ENCODE measurements at regions of chr2 and their contacts with region 1.

Region 1: DNA sequence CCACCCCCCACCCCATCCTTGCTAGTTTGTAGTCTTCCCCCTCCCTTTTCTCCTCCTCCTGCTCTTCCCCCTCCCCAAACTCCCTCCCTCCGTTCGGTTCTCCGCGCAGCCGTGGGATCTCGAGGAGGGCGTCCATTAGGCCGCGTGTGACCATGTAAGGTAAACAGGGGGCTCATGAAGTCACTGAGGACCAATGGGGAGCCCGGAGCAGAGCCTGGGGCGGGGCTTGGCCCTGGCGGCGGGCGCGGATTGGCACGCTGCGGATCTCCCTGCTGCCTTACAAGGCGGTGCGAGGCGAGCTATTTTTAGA is 246 bp upstream of the KLF7 start:
- DNase-seq: peak; percentile 99 to 100 (median 99)
- ATAC-seq: peak; percentile 93 to 95 (median 94)
- H3K4me3 ChIP-seq: peak overlapping the region; percentile 62 to 96 (median 80)
- H3K27ac ChIP-seq: peak overlapping the region; percentile 94 to 100 (median 100)
- H3K4me1 ChIP-seq: peaks cover 11 to 49% (median 31%) of the 10 kb centered on the region in 12 donors
- H3K27me3 ChIP-seq: no peaks in the 10 kb centered on the region
- CTCF ChIP-seq: no peak
- POLR2A ChIP-seq: no peak

Region 2: GRCh38 chr2:207046724-207047123 is 119.3 kb before region 1 on chr2:
- intact Hi-C with region 1: loop called in 1 of 10 experiments (anchors 10 kb)
- DNase-seq: no peak
- ATAC-seq: peak in 3 of 4 donors; percentile 65 to 77 (median 73)
- H3K4me3 ChIP-seq: no peak overlapping the region
- H3K27ac ChIP-seq: peak overlapping the region in 1 of 12 donors; percentile 0
- H3K4me1 ChIP-seq: peaks cover 0 to 22% (median 6%) of the 10 kb centered on the region in 12 donors
- H3K27me3 ChIP-seq: no peaks in the 10 kb centered on the region
- CTCF ChIP-seq: peak in 7 of 12 donors; percentile 29 to 50 (median 37)
- POLR2A ChIP-seq: no peak

Region 3: DNA sequence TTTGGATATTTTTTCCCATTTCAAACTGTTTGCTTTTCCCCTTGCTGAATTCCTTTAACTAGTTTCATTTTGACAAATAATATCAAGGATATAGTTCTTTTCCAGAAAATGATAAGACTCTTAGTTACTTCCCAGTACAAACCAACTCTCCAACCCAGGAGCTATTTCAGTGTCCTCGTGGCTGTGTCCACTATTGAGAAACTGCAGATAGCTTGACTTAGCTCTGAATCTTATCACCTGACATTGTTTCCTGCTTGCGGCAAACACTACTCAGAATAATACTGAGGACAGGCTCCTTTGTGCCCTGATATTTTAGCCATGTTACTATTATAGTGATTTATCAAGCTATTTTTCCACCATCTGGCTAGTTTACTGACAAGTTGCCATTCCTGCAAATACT is 74.8 kb before region 1 on chr2:
- intact Hi-C with region 1: loop called in 7 of 10 experiments (anchors 1 to 5 kb)
- DNase-seq: peak in 1 of 5 donors; percentile 36
- ATAC-seq: peak; percentile 75 to 87 (median 85)
- H3K4me3 ChIP-seq: no peak overlapping the region
- H3K27ac ChIP-seq: peak overlapping the region; percentile 61 to 89 (median 74)
- H3K4me1 ChIP-seq: peaks cover 30 to 100% (median 88%) of the 10 kb centered on the region in 12 donors
- H3K27me3 ChIP-seq: no peaks in the 10 kb centered on the region
- CTCF ChIP-seq: no peak
- POLR2A ChIP-seq: no peak

Region 4: DNA sequence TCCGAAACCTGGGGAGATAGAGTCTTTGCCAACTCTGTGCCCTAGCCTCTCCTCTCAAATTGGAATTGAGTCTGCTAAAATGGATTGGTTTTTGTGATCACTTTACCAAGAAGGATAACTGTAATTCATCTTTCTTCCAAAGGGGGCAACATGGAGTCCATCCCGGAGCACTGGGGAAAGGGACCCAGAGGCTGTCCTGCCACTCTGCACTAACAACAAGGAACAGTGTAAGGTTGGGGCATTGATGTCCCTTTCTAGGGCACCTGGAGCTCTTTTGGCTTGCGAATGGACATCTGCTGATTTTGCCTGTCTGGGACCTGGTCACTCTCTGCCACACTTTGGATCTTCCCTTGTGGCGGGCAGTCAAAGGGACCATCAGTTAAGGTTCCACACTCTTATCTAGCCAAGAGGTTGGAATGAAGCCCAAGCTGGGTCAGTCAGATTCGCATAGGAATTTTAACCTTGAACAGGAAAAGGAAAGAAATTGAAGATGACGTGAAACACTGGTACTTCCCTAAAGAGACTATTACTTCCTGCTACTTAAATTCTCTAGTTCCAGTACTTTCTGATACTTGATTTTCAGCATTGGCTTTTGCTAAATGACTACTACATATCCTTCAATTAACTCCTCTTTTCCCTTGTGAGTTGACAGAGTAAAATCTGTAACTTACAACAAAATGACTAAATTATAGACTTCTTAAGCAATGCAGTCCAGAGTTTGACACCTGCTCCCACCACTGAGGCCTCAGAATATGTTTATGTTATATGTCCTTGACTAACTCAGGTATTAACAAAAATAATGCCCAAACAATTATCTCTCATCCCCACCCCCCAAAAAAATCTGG is 64.5 kb after region 1 on chr2:
- intact Hi-C with region 1: loop called in 2 of 10 experiments (anchors 5 kb)
- DNase-seq: no peak
- ATAC-seq: peak in 2 of 4 donors; percentile 48 to 54
- H3K4me3 ChIP-seq: no peak overlapping the region
- H3K27ac ChIP-seq: peak overlapping the region in 5 of 12 donors; percentile 3 to 30 (median 27)
- H3K4me1 ChIP-seq: peaks cover 0 to 46% (median 23%) of the 10 kb centered on the region in 12 donors
- H3K27me3 ChIP-seq: no peaks in the 10 kb centered on the region
- CTCF ChIP-seq: peak; percentile 27 to 65 (median 46)
- POLR2A ChIP-seq: no peak

Region 5: DNA sequence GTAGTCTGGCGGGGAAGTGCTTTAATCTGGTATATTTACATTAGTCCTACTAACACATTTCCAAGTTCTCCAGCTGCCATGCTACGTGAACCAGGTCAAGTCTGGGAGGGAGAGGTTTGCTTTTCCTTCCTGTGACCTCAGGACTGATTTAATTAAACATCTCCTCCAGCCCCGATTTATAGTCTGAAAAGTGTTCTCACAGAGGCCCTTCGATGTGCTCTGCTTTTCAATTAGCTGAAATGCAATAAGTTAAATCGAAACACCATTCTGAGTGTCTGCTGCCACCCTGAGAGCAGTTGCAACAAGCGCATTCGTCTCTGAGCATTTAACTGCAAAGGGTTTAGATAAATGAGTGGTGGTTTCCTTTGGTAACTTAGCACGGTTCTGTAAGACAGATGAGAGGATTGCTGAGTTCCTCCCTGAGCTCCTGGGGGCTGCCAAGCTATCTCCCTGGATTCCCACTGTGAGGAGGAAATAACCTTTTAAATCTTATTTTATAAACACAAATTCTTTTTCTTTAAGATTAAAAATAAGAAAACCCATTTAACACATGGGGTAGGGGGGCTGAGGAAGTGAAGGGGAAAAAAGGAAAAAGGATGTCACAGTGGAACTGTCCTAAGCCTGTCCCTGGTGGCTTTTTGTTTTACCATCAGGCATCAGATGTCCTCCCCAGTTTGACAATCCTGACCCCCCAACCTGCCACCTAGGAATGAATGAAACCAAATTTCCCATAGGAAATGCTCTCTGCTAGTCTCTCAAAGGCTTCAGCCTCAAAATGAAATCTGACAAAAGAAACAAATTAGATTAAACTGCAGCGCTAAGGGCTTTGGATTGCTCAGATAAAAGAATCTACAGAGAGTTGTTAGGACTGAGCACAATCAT is 307.3 kb after region 1 on chr2:
- intact Hi-C with region 1: loop called (anchors 2 to 10 kb)
- DNase-seq: peak in 4 of 5 donors; percentile 47 to 50 (median 49)
- ATAC-seq: peak; percentile 57 to 89 (median 88)
- H3K4me3 ChIP-seq: peak overlapping the region in 4 of 12 donors; percentile 16 to 45 (median 29)
- H3K27ac ChIP-seq: peak overlapping the region in 6 of 12 donors; percentile 9 to 56 (median 38)
- H3K4me1 ChIP-seq: peaks cover 0 to 29% (median 13%) of the 10 kb centered on the region in 12 donors
- H3K27me3 ChIP-seq: no peaks in the 10 kb centered on the region
- CTCF ChIP-seq: peak; percentile 48 to 82 (median 72)
- POLR2A ChIP-seq: no peak